ENCODE measurements at regions of chr6 and their contacts with region 1.

Region 1: GRCh38 chr6:32589598-32590449 is at the start of gene HLA-DRB1:
- DNase-seq: peak in 1 of 2 donors; percentile 75
- ATAC-seq: peak; percentile 95
- H3K4me3 ChIP-seq: no peak within 1 kb of the TSS
- H3K27ac ChIP-seq: no peak within 1 kb of the TSS
- H3K4me1 ChIP-seq: no peaks in the 10 kb centered on the region
- H3K27me3 ChIP-seq: no peaks in the 10 kb centered on the region
- total RNA-seq, gene HLA-DRB1: 142 to 157 TPM

Region 2: DNA sequence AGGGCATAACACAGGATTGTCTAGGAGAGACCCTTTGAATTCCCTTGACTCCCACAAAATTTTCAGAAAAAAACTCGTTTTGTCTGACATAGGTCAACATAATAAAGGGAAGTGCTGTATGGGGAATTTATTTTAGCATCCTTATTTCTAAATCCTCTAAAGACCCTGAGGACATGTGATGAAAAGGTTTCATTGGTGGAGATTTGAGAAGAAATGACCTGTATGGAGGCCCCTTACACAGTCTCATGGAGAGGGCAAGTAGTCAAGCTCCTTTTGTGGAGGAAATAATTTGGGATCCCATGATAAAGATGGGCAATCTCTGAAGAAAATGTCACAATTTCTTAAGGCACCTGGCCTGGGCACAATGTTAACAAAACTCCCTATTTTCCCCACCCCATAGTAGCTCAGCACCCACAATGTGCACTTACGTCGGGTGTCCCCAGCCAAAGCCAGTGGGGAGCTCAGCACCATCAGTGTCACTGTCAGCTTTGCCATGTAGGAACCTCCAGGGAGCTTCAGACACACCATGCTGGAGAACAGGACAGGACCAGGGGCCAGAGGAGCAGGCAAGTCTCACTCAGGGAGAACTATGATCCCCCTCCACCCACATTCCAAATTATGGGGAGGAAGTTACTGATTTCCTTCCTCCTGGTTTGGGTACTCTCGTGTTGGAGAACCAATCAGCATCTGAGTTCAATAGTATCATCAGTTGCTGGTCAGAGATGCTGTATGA is 60.0 kb before region 1 on chr6 and contains the start of gene HLA-DRB5:
- intact Hi-C with region 1: loop called in 1 of 2 experiments (anchors 10 kb)
- DNase-seq: peak in 1 of 2 donors; percentile 65
- ATAC-seq: peak; percentile 74
- H3K4me3 ChIP-seq: no peak within 1 kb of the TSS
- H3K27ac ChIP-seq: no peak within 1 kb of the TSS
- H3K4me1 ChIP-seq: no peaks in the 10 kb centered on the region
- H3K27me3 ChIP-seq: no peaks in the 10 kb centered on the region
- total RNA-seq, gene HLA-DRB5: 91.1 to 127 TPM

Region 3: DNA sequence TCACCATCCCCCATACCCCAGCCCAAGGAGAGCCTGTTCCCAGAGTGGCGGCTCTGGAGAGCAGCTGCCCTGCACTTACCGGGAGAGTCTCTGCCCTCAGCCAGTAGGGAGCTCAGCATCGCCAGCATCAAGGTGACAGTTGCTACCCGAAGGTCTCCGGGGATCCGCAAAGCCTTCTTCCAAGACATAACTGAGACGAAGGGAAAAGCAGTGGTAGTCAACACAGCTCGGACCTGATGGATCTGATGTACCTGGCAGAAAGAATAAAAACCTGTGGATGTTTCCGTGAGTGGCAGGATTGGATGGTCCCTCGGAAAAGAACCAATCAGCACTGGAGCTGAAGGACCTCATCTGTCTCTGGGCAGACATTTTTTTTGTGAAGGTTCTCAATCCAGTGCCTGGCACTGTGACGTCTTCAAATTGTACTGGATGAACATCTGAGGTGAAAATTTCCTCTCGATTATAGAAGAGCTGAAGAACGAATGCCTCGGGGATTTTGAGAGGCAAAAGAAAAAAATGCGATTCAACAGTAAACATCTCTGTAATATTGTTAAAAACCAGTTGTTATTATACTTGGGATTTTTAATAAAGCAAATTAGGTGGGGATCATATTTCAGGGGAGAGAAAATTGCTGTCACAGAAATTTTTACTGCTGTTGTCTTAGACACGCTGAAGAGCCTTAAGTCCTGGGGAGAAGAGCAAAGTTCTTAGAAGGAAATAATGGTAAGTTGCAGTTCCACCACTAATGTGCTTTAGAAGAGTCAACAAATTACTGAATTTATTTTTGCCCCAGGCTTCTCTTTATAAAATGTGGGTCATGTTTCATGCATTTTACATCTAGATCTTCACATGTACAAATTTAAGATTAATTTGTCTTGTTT is 76.8 kb after region 1 on chr6 and contains the start of gene HLA-DQB1:
- intact Hi-C with region 1: no loop called
- DNase-seq: no peak
- ATAC-seq: peak; percentile 71
- H3K4me3 ChIP-seq: no peak within 1 kb of the TSS
- H3K27ac ChIP-seq: no peak within 1 kb of the TSS
- H3K4me1 ChIP-seq: no peaks in the 10 kb centered on the region
- H3K27me3 ChIP-seq: peaks cover 0 to 3% of the 10 kb centered on the region in 2 donors
- total RNA-seq, gene HLA-DQB1: 35.9 to 43.4 TPM

Measured in aorta (tissue), 5 donors.